Spleen (tissue), 13 donors: ENCODE measurements at regions of chr19 and their contacts with region 1.

Region 1: GRCh38 chr19:32224371-32225244 is 120.8 kb upstream of the ZNF507 start:
- DNase-seq: peak; percentile 90
- H3K4me3 ChIP-seq: peak overlapping the region in 7 of 8 donors; percentile 10 to 60 (median 25)
- H3K27ac ChIP-seq: no peak overlapping the region
- H3K4me1 ChIP-seq: peaks cover 4 to 19% (median 15%) of the 10 kb centered on the region in 6 donors
- H3K27me3 ChIP-seq: peaks cover 0 to 76% (median 21%) of the 10 kb centered on the region in 7 donors
- CTCF ChIP-seq: peak; percentile 88 to 100 (median 99)
- POLR2A ChIP-seq: no peak

Region 2: GRCh38 chr19:30669329-30670010 is 1555.1 kb before region 1 on chr19:
- intact Hi-C with region 1: loop called (anchors 5 kb)
- DNase-seq: peak; percentile 85
- H3K4me3 ChIP-seq: no peak overlapping the region
- H3K27ac ChIP-seq: peak overlapping the region in 5 of 8 donors; percentile 18 to 52 (median 33)
- H3K4me1 ChIP-seq: peaks cover 0 to 10% (median 0%) of the 10 kb centered on the region in 6 donors
- H3K27me3 ChIP-seq: peaks cover 0 to 62% (median 6%) of the 10 kb centered on the region in 7 donors
- CTCF ChIP-seq: peak in 10 of 11 experiments; percentile 16 to 80 (median 64)
- POLR2A ChIP-seq: no peak